ENCODE measurements at regions of chr1 and their contacts with region 1.

Region 1: GRCh38 chr1:112803906-112804762 is 89.0 kb upstream of the PPM1J start:
- DNase-seq: peak; percentile 81
- H3K27ac ChIP-seq: no peak overlapping the region
- CTCF ChIP-seq: peak; percentile 83

Region 2: DNA sequence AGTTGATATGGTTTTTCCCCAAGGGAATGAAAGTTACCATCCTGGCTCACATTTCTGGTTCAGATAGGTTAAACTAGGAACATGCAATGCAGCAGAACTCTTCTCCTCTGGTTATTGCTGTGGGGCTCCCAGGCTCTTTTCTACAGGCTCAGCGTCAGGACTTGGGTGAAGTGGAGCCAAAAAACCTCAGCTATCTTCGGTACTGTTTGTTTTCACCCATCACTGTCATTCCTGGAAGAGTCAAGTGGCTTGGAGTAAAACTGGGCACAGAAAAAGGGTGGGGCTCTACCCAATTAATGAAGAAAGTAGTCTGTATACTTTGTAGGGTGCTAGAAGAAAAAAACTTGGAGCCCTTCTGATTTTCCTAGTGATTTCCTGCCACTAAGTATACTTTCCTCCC is 285.9 kb before region 1 on chr1:
- CTCF ChIA-PET with region 1: interaction called, 16 read pairs
- POLR2A ChIA-PET with region 1: no interaction called
- DNase-seq: no peak
- H3K27ac ChIP-seq: no peak overlapping the region
- CTCF ChIP-seq: no peak

Region 3: DNA sequence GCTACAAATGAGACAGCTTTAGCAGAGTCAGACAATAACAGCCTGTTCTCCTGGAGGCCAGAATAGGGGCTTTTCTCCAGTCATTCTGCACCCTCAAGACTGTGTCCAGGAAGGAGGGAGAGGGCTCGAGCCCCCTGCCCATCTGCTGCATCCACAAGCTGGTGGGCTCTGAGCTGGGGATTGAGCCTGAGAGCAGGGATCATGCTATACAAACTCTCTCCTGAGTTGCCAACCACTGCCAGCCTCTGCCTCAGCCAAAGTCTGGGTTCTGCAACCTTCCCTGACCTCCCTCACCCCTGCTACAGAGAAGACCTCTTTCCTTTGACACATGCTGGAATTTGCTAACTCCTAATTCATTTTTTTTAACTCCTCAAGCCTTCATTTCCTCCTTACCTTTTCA is 74.2 kb before region 1 on chr1:
- CTCF ChIA-PET with region 1: interaction called, 10 read pairs
- POLR2A ChIA-PET with region 1: no interaction called
- DNase-seq: no peak
- H3K27ac ChIP-seq: no peak overlapping the region
- CTCF ChIP-seq: no peak

Region 4: GRCh38 chr1:113088972-113089371 is 284.8 kb after region 1 on chr1:
- CTCF ChIA-PET with region 1: no interaction called
- POLR2A ChIA-PET with region 1: no interaction called
- DNase-seq: no peak
- H3K27ac ChIP-seq: no peak overlapping the region
- CTCF ChIP-seq: no peak